Stomach (tissue), 19 donors: ENCODE measurements at regions of chr11 and their contacts with region 1.

Region 1: DNA sequence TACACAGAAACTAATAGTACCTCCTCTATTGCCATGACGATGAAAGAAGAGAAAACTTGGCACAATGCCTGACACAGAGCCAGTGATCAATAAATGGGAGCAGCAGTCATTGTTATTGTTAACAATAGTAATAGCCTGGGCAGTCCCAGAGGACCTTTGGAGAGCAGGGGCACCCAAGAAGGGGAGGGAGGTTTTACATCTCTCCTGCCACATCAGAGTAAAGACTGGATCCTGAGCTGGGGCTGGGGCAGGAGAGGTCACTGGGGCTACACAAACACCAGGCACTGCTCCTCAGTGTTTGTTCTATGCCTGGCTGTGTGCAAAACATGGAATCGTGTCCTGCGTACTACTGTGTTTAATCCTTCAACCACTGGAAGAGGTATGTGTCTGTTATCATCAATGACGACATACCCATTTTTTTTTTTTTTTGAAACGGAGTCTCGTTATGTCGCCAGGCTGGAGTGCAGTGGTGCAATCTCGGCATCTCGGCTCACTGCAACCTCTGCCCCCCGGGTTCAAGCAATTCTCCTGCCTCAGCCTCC is 25.0 kb upstream of the CREB3L1 start:
- DNase-seq: peak; percentile 67 to 78
- H3K4me3 ChIP-seq: no peak overlapping the region
- H3K27ac ChIP-seq: peak overlapping the region; percentile 37 to 60 (median 54)
- H3K4me1 ChIP-seq: peaks cover 7 to 45% (median 22%) of the 10 kb centered on the region in 4 donors
- H3K27me3 ChIP-seq: no peaks in the 10 kb centered on the region
- CTCF ChIP-seq: no peak
- EP300 ChIP-seq: no peak
- POLR2A ChIP-seq: no peak

Region 2: GRCh38 chr11:46210133-46210636 is 42.3 kb before region 1 on chr11:
- intact Hi-C with region 1: no loop called
- DNase-seq: peak in 1 of 2 donors; percentile 6
- H3K4me3 ChIP-seq: no peak overlapping the region
- H3K27ac ChIP-seq: no peak overlapping the region
- H3K4me1 ChIP-seq: no peaks in the 10 kb centered on the region
- H3K27me3 ChIP-seq: peaks cover 0 to 3% (median 0%) of the 10 kb centered on the region in 3 donors
- CTCF ChIP-seq: no peak
- EP300 ChIP-seq: no peak
- POLR2A ChIP-seq: no peak

Region 3: DNA sequence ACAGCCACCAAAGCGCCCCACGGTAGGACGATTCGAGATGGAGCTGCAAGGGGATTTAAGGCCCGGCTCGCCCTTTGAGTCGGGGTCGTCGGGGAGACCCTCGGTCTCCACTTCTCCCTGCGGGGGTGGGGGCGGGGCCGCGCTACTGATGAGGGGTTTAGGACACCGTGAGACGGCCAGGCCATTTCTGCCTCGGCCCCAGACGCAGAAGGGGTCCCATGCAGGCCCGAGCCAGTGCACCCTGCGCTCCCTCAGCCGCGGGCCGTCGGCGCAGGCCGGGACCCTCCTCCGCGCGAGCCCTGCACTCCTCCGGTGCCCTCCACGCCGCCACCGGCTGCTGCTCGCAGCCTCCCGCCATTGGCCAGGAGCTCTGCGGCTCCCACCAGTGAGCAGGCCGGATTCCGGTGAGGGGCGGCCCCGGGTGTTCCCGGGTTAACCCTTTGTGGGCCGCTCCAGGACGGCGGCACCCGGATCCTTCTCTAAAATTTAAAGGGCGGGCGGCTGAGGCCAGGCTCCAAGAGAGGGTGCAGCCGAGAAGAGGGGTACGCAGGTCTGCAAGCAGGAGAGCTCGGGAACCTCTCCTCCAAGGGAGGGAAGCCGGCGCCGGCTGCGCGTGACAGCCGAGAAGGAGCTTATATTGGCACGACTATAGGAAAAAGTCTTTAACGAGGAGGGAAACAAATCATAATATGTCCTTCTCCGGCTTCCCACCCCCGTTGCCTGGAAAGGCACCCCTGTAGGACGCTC is 43.0 kb after region 1 on chr11:
- intact Hi-C with region 1: loop called (anchors 5 kb)
- DNase-seq: peak; percentile 61 to 94
- H3K4me3 ChIP-seq: peak overlapping the region; percentile 45 to 62 (median 54)
- H3K27ac ChIP-seq: peak overlapping the region; percentile 25 to 74 (median 62)
- H3K4me1 ChIP-seq: peaks cover 52 to 92% (median 67%) of the 10 kb centered on the region in 4 donors
- H3K27me3 ChIP-seq: peaks cover 0 to 22% (median 0%) of the 10 kb centered on the region in 3 donors
- CTCF ChIP-seq: no peak
- EP300 ChIP-seq: no peak
- POLR2A ChIP-seq: no peak

Region 4: GRCh38 chr11:46306296-46306853 is 53.9 kb after region 1 on chr11:
- intact Hi-C with region 1: no loop called
- DNase-seq: no peak
- H3K4me3 ChIP-seq: no peak overlapping the region
- H3K27ac ChIP-seq: no peak overlapping the region
- H3K4me1 ChIP-seq: peaks cover 0 to 8% (median 6%) of the 10 kb centered on the region in 4 donors
- H3K27me3 ChIP-seq: no peaks in the 10 kb centered on the region
- CTCF ChIP-seq: no peak
- EP300 ChIP-seq: no peak
- POLR2A ChIP-seq: no peak

Region 5: GRCh38 chr11:46361283-46362155 is 109.1 kb after region 1 on chr11:
- intact Hi-C with region 1: no loop called
- DNase-seq: peak in 1 of 2 donors; percentile 91
- H3K4me3 ChIP-seq: peak overlapping the region; percentile 31 to 43 (median 40)
- H3K27ac ChIP-seq: peak overlapping the region; percentile 26 to 86 (median 81)
- H3K4me1 ChIP-seq: peaks cover 50 to 75% (median 61%) of the 10 kb centered on the region in 4 donors
- H3K27me3 ChIP-seq: no peaks in the 10 kb centered on the region
- CTCF ChIP-seq: no peak
- EP300 ChIP-seq: no peak
- POLR2A ChIP-seq: no peak